ENCODE measurements at regions of chr4 and their contacts with region 1.

Region 1: DNA sequence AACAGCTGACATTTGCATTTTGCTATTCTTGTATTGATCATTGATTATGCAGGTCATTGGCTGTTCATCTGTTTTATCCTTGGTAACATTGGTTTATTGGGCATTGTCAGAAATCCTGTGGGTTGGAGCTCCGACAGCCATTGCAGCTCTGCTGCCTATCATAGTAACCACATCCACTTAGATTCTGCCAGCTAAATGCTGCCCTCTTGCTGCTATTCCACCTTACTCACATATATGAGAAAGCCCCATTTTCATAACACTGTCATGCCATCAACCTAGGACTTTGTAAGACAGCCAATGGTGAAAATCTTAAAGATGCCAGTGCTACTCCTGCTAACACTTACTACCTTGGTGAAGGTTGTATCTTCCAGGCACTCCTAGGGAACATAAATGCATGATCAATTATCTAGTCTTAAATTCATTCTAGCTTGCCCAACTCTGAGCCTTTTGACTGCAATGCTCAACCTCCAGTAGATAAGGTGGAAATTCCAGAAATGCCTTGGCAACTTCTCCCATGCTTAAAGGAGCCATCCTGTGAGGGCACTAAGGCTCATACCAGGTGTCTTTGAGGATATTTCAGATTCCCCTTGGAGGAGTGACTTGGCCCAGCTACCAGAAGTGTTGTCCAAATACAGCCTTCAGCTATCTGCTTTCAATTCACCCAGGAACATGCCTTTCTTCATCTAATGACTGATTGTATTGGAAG is 187.1 kb upstream of the CXCL13 start:
- DNase-seq: peak; percentile 23
- H3K4me3 Mint-ChIP-seq: no peak overlapping the region
- H3K27ac Mint-ChIP-seq: no peak overlapping the region
- H3K4me1 Mint-ChIP-seq: no peaks in the 10 kb centered on the region
- H3K27me3 Mint-ChIP-seq: peaks cover 7% of the 10 kb centered on the region

Region 2: DNA sequence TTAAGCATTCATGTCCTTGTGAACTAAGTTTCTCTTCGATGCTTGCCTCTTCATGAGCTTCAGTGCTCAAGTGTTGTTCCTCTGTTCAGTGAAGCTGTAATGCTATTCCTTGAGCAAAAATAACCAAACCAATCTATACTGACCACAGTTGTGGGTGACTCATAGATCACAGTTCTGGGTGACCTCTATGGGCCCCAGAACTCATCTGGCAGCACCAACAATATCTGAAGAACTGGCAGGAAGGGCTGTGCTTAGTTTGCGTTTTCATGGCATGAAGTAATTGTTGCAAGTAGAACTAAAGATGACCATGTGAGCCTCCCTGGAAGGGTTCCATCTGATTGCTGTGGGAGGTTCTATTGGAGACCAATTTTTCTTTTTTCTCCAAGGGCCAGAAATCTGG is 155.2 kb before region 1 on chr4:
- CTCF ChIA-PET with region 1: no interaction called
- DNase-seq: no peak
- H3K4me3 Mint-ChIP-seq: no peak overlapping the region
- H3K27ac Mint-ChIP-seq: no peak overlapping the region
- H3K4me1 Mint-ChIP-seq: no peaks in the 10 kb centered on the region
- H3K27me3 Mint-ChIP-seq: no peaks in the 10 kb centered on the region

Region 3: DNA sequence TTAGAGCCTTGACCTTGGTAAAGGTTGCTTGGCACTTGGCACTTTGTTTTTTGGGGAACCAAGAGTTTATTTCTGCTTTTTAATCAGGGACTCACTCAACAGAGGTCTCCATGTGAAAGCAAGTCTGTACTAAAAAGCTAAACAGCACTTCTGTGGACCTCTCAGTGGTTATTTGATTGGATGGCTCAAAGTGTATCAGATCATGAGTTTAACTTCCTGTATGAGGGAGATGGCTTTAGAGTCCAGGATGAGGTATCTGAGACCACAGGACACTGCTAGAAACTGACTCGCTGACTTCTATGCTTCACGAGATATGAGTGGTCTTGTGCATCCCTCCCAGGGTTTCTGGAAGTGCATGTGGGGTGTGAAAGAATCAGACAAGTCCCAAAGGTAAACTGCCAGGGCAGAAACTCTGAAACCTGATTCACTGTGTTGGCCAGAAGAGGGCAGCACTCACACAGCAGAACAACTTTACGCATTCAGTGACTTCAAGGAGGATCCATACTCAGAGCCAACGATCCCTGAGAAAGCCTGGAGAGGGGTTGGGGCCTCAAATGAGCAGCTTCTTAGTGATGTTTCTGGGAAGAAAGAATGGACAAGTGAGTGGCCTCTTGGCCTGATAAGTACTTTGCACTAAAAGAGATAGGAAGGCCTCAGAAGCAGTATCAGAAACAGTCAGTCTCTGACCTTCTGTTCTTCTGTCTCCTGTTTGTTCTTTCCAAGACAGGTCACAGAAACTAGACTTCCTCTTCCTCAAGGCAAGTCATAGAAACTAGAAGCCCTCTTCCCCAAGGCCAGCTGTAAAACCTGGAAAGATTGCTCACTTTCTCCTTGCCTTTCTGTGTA is 33.1 kb before region 1 on chr4:
- CTCF ChIA-PET with region 1: interaction called, 22 read pairs
- DNase-seq: peak; percentile 65
- H3K4me3 Mint-ChIP-seq: no peak overlapping the region
- H3K27ac Mint-ChIP-seq: no peak overlapping the region
- H3K4me1 Mint-ChIP-seq: peaks cover 5% of the 10 kb centered on the region
- H3K27me3 Mint-ChIP-seq: peaks cover 16% of the 10 kb centered on the region

Region 4: GRCh38 chr4:77433418-77433733 is 14.9 kb after region 1 on chr4:
- CTCF ChIA-PET with region 1: interaction called, 13 read pairs
- DNase-seq: peak; percentile 29
- H3K4me3 Mint-ChIP-seq: no peak overlapping the region
- H3K27ac Mint-ChIP-seq: no peak overlapping the region
- H3K4me1 Mint-ChIP-seq: peaks cover 3% of the 10 kb centered on the region
- H3K27me3 Mint-ChIP-seq: no peaks in the 10 kb centered on the region